HAP-1 (cell line): ENCODE measurements at regions of chr2 and their contacts with region 1.

Region 1: DNA sequence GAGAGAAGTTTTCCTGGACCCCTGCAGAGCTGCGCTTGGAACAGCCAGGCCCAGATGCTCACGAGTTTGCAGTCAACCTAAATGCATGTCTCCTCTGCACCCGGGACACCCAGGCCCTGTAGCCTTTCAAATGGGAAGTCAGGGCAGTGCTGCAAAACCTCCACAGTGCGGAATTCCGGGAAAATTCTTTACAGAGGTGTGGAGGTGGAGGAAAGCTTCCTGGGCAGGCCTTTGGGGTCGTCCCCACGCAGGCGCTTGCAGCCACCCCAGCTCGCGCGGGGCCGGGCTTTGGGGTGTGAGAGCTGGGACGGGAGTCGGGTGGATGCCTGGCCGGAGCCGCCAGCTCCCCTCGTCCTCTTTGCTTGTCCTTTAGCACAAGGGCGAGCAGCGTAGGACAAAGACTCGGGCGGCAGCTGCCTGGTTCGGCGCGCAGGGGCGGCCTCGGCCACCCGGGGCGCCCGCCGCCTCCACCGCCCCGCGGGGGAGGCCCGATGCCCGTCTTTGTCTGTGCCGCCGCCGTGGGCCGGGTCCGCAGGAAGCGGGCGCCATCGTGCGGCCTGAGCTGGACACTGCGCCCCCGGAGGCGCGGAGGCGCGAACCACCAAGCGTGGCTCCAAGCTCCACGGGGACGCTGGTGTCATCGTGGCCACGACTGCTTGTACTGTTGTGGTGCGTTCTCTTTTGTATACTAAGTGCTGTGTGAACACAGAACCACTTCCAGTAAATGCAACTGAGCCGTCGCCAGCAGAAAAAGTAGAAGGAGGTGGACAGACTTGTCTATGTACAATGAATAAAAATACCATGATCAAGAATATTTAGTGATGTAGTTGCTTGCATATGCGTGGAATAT is 28.2 kb upstream of the BCL11A start:
- DNase-seq: peak; percentile 66 to 83
- H3K4me3 ChIP-seq: peak overlapping the region; percentile 24
- H3K4me1 ChIP-seq: peaks cover 3% of the 10 kb centered on the region; the same call in 1 of the 2 replicates
- H3K27me3 ChIP-seq: no peaks in the 10 kb centered on the region; the same call in 1 of the 2 replicates

Region 2: DNA sequence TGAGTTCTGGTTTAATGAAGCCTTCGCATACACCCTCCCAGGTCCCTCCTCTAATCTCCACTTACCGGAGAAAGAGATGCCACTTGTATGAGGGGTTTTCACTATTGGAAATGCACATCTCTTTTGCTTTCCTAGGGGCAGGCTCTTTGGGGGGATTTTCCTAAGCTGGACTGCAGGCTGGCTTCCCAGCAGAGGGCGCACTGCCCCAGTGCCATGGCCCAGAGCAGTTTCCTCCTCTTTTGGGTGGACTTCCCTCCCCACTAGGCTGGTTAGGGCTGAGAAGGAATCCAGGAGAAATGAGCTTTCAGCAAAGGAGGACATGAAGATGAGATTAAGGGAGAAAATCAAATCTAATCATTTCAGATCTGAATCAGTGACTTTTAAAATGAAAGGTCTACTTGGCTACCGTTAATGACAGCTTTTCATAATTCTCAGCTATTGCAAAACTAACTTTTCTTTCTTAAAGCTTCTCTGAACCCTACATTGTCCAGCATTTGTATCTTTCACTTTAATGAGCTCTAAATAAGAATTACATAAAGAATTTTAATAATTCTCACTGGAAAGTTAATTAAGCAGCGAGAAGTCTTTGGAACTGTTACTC is 1556.4 kb before region 1 on chr2:
- in situ Hi-C with region 1: loop called (anchors 10 kb)
- DNase-seq: peak; percentile 9 to 71
- H3K4me3 ChIP-seq: no peak overlapping the region
- H3K4me1 ChIP-seq: no peaks in the 10 kb centered on the region
- H3K27me3 ChIP-seq: peaks cover 4% of the 10 kb centered on the region; the same call in 1 of the 2 replicates